Mammary epithelial cell (primary cell): ENCODE measurements at regions of chr7 and their contacts with region 1.

Region 1: GRCh38 chr7:28258240-28258639 is 77.6 kb upstream of the JAZF1 start:
- DNase-seq: no peak
- H3K4me3 ChIP-seq: no peak overlapping the region
- H3K27ac ChIP-seq: no peak overlapping the region
- H3K4me1 ChIP-seq: no peaks in the 10 kb centered on the region
- H3K27me3 ChIP-seq: no peaks in the 10 kb centered on the region
- CTCF ChIP-seq: no peak

Region 2: DNA sequence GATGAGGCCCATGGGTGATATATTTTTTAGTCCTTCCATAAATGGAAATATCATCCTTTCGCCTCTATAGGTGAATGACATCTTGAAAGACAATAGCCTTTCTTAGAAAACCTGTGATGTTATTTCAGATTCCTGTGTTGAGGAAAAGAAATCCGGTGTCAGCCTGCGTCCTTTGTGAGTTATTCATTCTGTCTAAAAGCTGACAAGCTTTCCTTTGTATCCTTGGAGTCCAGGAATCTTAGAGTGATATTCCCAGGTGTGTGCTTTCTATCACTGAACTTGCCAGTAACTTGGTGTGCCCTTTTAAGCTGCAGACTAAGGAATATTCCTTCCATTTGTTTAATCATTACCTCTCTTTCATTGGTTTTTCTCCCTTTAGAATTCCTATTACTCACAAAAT is 974.7 kb before region 1 on chr7:
- CTCF ChIA-PET with region 1: interaction called, 10 read pairs
- dilution Hi-C with region 1: no loop called
- in situ Hi-C with region 1: no loop called
- intact Hi-C with region 1: no loop called
- DNase-seq: no peak
- H3K4me3 ChIP-seq: no peak overlapping the region
- H3K27ac ChIP-seq: no peak overlapping the region
- H3K4me1 ChIP-seq: no peaks in the 10 kb centered on the region
- H3K27me3 ChIP-seq: peaks cover 2% of the 10 kb centered on the region
- CTCF ChIP-seq: no peak

Region 3: GRCh38 chr7:28292834-28293526 is 34.7 kb after region 1 on chr7:
- CTCF ChIA-PET with region 1: no interaction called
- dilution Hi-C with region 1: no loop called
- in situ Hi-C with region 1: no loop called
- intact Hi-C with region 1: no loop called
- DNase-seq: no peak
- H3K4me3 ChIP-seq: no peak overlapping the region
- H3K27ac ChIP-seq: no peak overlapping the region
- H3K4me1 ChIP-seq: no peaks in the 10 kb centered on the region
- H3K27me3 ChIP-seq: peaks cover 4% of the 10 kb centered on the region
- CTCF ChIP-seq: no peak

Region 4: GRCh38 chr7:28358423-28358868 is 100.2 kb after region 1 on chr7:
- CTCF ChIA-PET with region 1: no interaction called
- dilution Hi-C with region 1: no loop called
- in situ Hi-C with region 1: no loop called
- intact Hi-C with region 1: no loop called
- DNase-seq: peak; percentile 96
- H3K4me3 ChIP-seq: no peak overlapping the region
- H3K27ac ChIP-seq: no peak overlapping the region
- H3K4me1 ChIP-seq: peaks cover 31% of the 10 kb centered on the region
- H3K27me3 ChIP-seq: no peaks in the 10 kb centered on the region
- CTCF ChIP-seq: no peak